Left lung (tissue), 14 donors: ENCODE measurements at regions of chr19 and their contacts with region 1.

Region 1: GRCh38 chr19:41563854-41564514 is 12.0 kb upstream of the CEACAM21 start:
- DNase-seq: no peak
- ATAC-seq: peak; percentile 17
- H3K4me3 ChIP-seq: no peak overlapping the region
- H3K27ac ChIP-seq: no peak overlapping the region
- H3K4me1 ChIP-seq: peaks cover 0 to 22% of the 10 kb centered on the region in 2 donors
- H3K27me3 ChIP-seq: peaks cover 35 to 52% of the 10 kb centered on the region in 2 donors
- CTCF ChIP-seq: no peak

Region 2: DNA sequence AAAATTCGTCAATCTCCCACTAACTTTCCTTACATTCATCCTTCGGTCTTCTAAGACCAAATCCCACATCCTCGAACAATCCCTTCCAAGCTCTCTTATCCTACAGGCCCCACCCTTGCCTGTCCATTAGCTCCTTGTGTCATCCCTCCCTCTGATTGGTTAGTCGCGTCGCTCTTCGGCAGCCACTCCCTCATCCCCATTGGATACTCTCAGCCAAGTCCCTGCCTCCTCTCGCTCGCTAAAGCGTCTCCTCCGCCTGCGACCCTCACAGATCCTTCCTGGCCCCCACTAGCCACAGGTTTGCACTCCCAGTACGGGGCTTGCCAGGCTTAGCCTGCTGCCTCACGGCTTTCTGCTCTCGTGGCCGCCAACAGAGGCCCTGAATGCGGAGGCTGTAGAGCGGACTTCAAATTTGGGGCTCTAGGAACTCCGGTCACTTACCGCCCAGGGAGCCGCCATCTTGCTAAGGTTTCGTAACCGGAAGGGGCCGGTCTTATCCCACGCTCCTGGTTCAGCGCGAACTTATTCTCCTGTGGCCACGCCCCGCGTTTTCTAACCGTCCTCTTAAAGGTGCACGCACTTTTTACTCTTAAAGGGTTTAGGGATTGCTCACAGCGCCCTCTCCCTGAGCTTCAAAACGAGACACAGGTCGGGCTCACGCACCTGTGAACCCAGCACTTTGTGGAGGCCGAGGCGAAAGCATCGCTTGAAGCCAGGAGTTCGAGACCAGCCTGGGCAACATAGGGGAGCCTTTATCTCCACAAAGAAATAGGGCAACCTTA is 124.4 kb before region 1 on chr19 and contains the start of gene DMAC2:
- intact Hi-C with region 1: loop called in 1 of 2 experiments (anchors 10 kb)
- DNase-seq: peak; percentile 96 to 98 (median 96)
- ATAC-seq: peak; percentile 97
- H3K4me3 ChIP-seq: peak within 1 kb of the TSS; percentile 62 to 74
- H3K27ac ChIP-seq: peak within 1 kb of the TSS; percentile 93 to 94
- H3K4me1 ChIP-seq: peaks cover 5 to 23% of the 10 kb centered on the region in 2 donors
- H3K27me3 ChIP-seq: no peaks in the 10 kb centered on the region
- CTCF ChIP-seq: peak; percentile 27
- polyA plus RNA-seq, gene DMAC2: 48.4 to 64.6 (median 58.4) TPM

Region 3: DNA sequence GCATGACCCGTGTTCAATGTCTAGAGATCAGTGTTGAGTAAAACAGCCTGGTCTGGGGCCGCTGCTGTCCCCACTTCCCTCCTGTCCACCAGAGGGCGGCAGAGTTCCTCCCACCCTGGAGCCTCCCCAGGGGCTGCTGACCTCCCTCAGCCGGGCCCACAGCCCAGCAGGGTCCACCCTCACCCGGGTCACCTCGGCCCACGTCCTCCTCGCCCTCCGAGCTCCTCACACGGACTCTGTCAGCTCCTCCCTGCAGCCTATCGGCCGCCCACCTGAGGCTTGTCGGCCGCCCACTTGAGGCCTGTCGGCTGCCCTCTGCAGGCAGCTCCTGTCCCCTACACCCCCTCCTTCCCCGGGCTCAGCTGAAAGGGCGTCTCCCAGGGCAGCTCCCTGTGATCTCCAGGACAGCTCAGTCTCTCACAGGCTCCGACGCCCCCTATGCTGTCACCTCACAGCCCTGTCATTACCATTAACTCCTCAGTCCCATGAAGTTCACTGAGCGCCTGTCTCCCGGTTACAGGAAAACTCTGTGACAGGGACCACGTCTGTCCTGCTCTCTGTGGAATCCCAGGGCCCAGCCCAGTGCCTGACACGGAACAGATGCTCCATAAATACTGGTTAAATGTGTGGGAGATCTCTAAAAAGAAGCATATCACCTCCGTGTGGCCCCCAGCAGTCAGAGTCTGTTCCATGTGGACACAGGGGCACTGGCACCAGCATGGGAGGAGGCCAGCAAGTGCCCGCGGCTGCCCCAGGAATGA is 142.9 kb after region 1 on chr19:
- intact Hi-C with region 1: no loop called
- DNase-seq: peak in 3 of 4 donors; percentile 30 to 92 (median 64)
- ATAC-seq: peak; percentile 97
- H3K4me3 ChIP-seq: peak overlapping the region in 1 of 2 donors; percentile 30
- H3K27ac ChIP-seq: no peak overlapping the region
- H3K4me1 ChIP-seq: peaks cover 0 to 4% of the 10 kb centered on the region in 2 donors
- H3K27me3 ChIP-seq: peaks cover 0 to 61% of the 10 kb centered on the region in 2 donors
- CTCF ChIP-seq: peak; percentile 56 to 91